ENCODE measurements at regions of chr11 and their contacts with region 1.

Region 1: DNA sequence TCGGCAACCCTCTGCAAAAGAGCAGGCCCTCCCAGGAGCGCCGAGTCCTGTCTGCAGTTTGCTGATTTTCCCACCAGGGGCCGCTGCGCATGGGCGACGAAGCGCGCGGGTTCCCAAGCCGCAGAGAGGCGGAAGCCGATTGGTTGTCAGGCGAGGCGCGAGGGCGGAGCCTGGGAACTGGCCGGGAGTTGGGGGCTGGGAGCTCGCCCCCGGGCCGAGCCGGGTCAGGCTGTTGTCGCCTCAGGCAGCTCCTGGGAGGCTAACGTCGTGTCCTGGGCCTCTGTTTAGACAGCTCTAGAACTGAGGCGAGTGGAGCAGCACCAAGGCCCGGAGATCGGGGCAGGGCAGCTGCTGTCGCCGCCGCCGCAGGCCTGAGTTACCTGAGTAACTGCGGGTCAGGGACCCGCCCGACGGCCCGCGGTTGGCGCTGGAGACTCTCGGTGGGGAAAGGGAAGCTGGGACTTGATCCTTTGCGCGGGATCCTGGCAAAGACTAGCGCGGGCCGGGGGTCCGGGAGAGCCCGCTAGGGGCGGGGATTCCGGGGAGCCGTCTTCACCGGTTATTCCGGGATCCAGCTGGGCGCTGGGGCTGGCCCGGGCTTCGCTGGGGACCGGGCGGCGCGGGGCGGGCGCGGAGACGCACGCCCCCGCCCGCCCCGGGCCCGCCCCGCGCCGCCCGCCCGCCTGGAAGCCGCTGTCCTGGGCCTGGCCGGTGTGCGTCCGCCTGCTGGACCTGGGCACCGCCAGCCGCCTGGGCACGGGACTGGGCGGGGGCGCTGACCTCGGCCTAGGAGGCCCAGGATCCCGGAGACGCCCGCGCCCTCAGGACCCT is at the start of gene STIM1:
- DNase-seq: peak; percentile 98
- H3K4me3 Mint-ChIP-seq: peak within 1 kb of the TSS; percentile 97
- H3K27ac Mint-ChIP-seq: peak within 1 kb of the TSS; percentile 100
- H3K4me1 Mint-ChIP-seq: peaks cover 56% of the 10 kb centered on the region
- H3K27me3 Mint-ChIP-seq: no peaks in the 10 kb centered on the region
- total RNA-seq, gene STIM1: 111 to 113 TPM

Region 2: DNA sequence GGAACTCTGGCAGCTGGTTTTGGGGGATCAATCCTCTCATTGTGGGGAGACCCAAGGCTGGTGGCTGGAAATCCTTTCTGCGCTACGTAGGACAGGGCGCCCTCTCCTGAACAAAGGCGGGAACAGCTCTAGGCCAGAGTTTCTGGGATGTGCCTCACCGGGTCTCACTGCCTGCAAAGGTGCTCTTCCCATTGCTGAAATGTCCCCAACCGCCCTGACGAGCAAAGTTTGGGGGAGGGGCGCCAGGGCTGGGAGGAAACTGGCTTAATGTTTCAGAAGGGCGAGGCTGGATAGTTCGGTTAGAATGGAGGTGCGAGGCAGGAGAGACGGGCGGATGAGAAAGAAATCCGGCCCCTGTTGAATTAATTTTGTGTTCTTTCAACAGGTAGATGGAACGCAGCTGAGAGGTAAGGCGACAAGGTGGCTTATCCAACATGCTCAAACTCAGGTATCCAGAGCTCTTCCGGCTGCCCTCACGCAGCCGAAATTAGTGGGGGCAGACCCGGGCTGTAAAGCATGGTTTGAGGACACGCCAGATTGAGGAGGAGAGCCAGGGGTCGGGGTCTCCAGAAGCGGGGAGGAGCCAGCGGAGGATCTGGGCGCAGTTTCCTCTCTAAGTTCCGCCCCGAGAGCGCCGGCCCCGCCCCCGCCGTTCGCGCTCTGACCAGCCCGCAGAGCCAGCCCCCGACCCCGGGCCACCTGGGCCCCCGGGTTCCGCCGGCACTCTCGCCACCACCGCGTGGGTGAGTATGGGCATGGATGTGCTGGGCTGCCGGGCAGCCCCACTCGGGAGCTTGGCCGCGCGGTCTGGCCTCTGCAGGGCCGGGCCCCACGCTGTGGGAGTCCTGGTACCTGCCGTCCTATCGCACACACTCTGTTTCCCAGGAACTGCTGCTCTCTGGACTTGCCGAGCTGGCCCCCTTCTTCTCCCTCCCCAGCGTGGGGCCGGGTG is 47.0 kb before region 1 on chr11 and contains the start of gene PGAP2:
- CTCF ChIA-PET with region 1: interaction called, 16 read pairs
- POLR2A ChIA-PET with region 1: interaction called, 12 read pairs
- DNase-seq: peak; percentile 65
- H3K4me3 Mint-ChIP-seq: peak within 1 kb of the TSS; percentile 85
- H3K27ac Mint-ChIP-seq: peak within 1 kb of the TSS; percentile 64
- H3K4me1 Mint-ChIP-seq: peaks cover 20% of the 10 kb centered on the region
- H3K27me3 Mint-ChIP-seq: no peaks in the 10 kb centered on the region
- total RNA-seq, gene PGAP2: 18.0 to 19.0 TPM

Region 3: GRCh38 chr11:3880724-3881123 is 25.5 kb after region 1 on chr11:
- CTCF ChIA-PET with region 1: interaction called, 222 read pairs
- POLR2A ChIA-PET with region 1: interaction called, 174 read pairs
- DNase-seq: no peak
- H3K4me3 Mint-ChIP-seq: no peak overlapping the region
- H3K27ac Mint-ChIP-seq: no peak overlapping the region
- H3K4me1 Mint-ChIP-seq: peaks cover 60% of the 10 kb centered on the region
- H3K27me3 Mint-ChIP-seq: no peaks in the 10 kb centered on the region

Region 4: DNA sequence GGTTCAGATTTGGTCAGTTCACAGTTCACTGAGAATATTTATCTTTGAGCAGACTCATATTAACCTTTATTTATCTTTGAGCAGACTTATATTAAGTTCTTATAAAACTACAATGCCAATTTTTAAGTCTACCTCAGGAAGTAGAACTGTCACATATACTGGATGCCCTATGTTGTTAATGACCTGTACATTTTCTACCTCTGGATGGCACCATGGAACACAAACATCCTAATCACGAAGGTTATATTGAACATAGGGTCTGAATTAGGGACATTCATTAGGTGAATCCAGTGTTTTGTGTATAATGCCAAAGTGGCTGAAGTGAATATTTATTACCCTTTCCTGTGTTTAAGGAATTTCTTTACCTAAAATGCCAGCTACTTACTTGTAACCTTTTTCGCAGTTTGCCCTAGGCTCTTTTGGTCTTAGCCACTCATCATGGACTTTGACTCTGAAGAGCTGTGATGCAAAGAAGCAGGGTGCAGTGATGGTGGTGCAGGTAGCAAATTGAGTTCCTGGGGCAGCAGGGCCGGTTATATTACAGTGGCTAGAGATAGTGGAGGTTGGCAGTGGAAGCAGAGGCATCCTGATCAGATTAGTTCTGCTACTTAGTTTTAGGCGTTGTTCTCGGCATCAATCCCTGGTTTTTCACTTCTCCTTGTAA is 72.1 kb after region 1 on chr11:
- CTCF ChIA-PET with region 1: interaction called, 10 read pairs
- POLR2A ChIA-PET with region 1: interaction called, 6 read pairs
- DNase-seq: no peak
- H3K4me3 Mint-ChIP-seq: no peak overlapping the region
- H3K27ac Mint-ChIP-seq: no peak overlapping the region
- H3K4me1 Mint-ChIP-seq: peaks cover 9% of the 10 kb centered on the region
- H3K27me3 Mint-ChIP-seq: no peaks in the 10 kb centered on the region

Region 5: DNA sequence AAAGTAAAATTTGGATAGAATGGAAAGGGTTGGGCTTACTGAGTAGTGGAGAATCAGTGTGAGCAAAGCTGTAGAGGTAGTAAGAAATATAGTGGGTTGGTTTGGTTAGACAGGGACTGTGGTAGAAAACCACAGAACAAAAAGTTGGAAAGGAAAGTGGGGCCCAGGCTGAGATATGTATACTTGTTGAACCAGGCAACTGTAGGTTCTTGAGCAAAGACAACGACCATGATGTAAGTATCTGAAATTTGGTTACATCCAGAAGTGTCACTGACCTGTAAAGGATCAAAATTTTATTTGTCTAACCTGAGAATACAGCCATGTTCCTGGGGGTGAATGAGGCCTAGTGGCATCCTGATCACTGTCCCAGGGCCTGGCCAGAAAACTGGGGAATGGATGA is 114.4 kb after region 1 on chr11:
- CTCF ChIA-PET with region 1: interaction called, 31 read pairs
- POLR2A ChIA-PET with region 1: interaction called, 4 read pairs
- DNase-seq: peak; percentile 38
- H3K4me3 Mint-ChIP-seq: no peak overlapping the region
- H3K27ac Mint-ChIP-seq: peak overlapping the region; percentile 49
- H3K4me1 Mint-ChIP-seq: peaks cover 41% of the 10 kb centered on the region
- H3K27me3 Mint-ChIP-seq: no peaks in the 10 kb centered on the region

Region 6: DNA sequence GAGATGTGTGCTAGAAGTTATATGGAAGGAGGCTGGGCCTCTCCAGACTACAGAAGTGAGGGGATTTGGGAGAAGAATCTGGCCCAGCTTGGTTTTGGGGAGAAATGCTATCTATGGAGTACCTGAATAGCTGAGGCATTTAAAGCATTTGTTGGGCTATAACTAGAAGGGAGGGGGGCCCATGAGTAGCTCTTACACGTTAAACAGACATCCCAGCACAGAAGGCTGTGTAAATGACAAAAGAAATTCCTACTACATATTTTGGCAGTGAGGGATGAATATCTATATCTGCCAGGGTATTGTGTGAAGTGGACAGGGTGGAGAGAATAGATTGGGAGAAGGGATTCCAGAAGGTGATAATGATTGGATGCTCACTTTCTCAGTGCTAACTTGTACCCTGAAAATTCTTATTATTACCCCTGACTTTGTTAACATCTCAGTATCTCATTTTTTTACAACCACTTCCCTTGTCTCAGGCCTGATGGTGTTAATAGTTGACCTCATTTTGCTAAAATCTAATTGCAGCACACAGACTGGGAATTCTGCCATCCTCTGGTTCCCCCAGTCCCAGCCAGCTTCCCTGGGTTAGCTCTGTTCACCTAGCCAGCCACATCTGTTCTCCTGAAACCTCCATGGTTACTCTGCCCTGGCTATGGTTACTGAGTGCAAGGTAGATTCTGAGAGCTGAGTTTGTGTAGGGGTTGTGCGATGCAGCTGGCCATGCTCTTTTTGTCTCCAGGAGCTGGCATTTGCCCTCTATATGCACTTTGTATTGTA is 210.6 kb after region 1 on chr11:
- CTCF ChIA-PET with region 1: interaction called, 554 read pairs
- POLR2A ChIA-PET with region 1: interaction called, 108 read pairs
- DNase-seq: no peak
- H3K4me3 Mint-ChIP-seq: no peak overlapping the region
- H3K27ac Mint-ChIP-seq: no peak overlapping the region
- H3K4me1 Mint-ChIP-seq: peaks cover 41% of the 10 kb centered on the region
- H3K27me3 Mint-ChIP-seq: no peaks in the 10 kb centered on the region

Measured in activated CD4-positive, alpha-beta memory T cell treated with anti-CD3 and anti-CD28 coated beads, Interleukin-2, amount 10 ng/mL, durations not matched to agents 7 days and 5 days (primary cell).